ENCODE measurements at regions of chr20 and their contacts with region 1.

Region 1: DNA sequence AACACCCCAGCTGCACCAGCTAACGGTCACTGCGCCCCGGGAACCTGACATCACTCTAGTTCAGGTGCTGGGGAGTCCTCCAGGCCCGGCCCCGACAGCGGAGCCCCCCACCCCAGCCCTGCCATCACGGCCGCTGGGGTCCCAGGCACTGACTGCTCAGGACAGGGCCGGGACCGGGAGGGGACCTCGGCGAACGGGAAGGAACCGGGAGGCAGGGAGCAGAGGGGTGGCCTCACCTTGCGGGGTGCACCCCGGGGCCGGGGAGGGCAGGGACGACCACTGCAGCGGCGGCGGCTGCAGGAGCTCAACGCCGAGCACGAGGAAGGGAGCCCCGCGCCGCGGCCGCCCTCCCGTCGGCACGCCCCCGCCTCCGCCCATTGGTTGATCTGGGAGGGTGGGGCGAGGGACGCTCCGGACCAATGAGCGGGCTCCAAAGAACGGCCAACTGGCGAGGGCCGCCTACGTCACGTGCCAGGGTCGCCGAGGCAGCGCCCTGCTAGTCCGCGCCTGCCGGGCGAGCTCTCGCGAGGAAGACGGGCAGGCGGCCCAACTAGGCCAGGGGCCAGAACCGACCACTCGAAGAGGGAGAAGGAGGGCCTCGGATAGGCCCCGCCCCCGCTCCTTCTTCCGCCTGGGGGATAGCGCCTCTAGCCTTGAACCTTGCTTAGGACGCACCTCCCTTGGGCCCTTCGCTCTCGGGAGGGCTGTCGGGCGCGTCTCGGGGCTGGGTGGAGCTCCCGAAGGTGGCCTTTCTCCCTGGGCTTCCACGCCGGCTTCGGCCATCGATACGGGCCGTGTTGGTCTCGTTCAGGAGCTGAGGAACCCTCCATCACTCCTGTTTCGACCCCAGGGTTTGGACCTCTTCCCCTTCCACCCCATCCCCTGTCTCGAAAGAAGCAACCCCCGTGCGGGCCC is at the start of gene ADISSP:
- DNase-seq: peak; percentile 99
- ATAC-seq: peak; percentile 95 to 98 (median 96)
- H3K4me3 ChIP-seq: peak within 1 kb of the TSS; percentile 53 to 83 (median 65)
- H3K27ac ChIP-seq: peak within 1 kb of the TSS; percentile 48 to 95 (median 85)
- H3K4me1 ChIP-seq: peaks cover 7 to 61% (median 38%) of the 10 kb centered on the region in 9 donors
- H3K27me3 ChIP-seq: no peaks in the 10 kb centered on the region
- CTCF ChIP-seq: peak in 6 of 9 donors; percentile 7 to 40 (median 19)
- total RNA-seq, gene ADISSP: 7.7 to 15.7 (median 9.7) TPM

Region 2: DNA sequence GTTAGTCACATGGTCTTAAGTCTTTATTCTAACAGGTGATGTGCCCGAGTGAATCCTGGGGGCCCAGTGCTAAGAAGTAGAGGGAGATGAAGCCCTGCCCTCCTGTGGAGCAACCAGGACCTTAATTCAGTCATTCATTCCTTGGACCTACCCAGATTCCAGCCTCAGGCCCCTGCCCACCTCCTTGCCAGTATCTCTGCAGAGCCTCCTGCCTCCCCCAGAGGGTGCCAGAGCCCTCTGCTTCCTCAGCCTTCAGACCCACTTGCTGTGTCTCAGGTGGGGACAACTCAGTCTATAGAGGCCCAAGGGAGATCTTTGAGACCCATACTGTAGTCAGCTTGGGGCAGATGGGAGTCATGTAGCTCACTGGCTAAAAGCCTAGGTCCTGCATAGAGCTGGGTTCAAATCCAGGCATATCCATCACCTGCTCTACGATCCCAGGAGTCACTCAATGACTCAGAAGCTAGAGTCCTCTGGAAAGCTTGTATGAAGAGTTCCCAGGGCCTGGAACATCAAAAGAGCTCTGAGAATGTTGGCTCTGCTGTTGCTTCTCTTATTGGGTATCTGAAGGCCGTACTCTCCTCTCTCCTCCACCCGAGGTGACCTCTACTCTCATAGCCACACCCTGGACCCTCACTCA is 51.4 kb before region 1 on chr20:
- intact Hi-C with region 1: loop called in 5 of 10 experiments (anchors 5 kb)
- DNase-seq: peak; percentile 46 to 48
- ATAC-seq: peak in 7 of 8 donors; percentile 55 to 84 (median 73)
- H3K4me3 ChIP-seq: no peak overlapping the region
- H3K27ac ChIP-seq: no peak overlapping the region
- H3K4me1 ChIP-seq: peaks cover 0 to 27% (median under 1%) of the 10 kb centered on the region in 9 donors
- H3K27me3 ChIP-seq: peaks cover 0 to 4% (median 0%) of the 10 kb centered on the region in 7 donors
- CTCF ChIP-seq: peak; percentile 52 to 86 (median 78)

Region 3: DNA sequence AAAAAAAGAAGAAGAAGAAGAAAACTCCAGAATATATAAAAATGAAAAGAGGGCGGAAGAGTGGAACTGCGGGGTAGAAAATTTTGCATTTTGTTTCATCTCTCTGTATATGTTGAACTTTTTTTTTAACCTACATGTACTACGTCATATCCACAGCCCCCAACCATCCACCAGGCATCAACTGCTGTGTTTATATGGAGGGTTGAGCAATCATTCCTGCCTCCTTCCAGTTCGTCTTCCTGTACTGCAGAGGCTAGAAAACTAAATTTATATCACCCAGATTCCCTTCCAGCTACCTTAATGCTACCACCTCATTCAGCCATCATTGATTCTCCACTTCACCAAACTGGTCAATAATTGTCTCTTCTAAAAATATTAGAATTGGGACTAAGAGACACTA is 45.8 kb before region 1 on chr20:
- intact Hi-C with region 1: loop called in 5 of 10 experiments (anchors 5 kb)
- DNase-seq: no peak
- ATAC-seq: no peak
- H3K4me3 ChIP-seq: no peak overlapping the region
- H3K27ac ChIP-seq: no peak overlapping the region
- H3K4me1 ChIP-seq: peaks cover 0 to 6% (median under 1%) of the 10 kb centered on the region in 9 donors
- H3K27me3 ChIP-seq: peaks cover 0 to 22% (median 3%) of the 10 kb centered on the region in 7 donors
- CTCF ChIP-seq: no peak

Region 4: DNA sequence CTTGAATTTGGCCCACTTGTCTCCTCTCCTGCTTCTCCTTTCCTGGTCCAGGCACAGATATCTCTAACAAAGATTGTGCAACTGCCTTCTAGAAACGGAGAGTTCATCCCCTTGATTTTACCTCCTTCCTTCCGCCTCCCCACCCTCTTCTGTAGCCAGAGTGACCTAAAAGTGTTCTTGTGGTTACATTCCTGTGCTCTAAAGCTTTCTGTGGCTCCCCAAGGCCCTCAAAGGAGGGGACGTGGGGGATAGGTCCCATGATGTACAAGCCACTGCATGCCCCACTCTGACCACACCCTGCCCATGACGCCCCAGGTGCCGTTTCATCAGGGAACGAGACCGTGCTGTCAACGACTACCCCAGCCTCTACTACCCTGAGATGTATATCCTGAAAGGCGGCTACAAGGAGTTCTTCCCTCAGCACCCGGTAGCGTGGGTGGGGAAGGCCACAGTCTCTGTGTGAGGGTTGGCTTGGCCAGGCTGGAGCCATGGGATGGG is 36.6 kb after region 1 on chr20:
- intact Hi-C with region 1: no loop called
- DNase-seq: no peak
- ATAC-seq: no peak
- H3K4me3 ChIP-seq: no peak overlapping the region
- H3K27ac ChIP-seq: peak overlapping the region in 1 of 10 donors; percentile 93
- H3K4me1 ChIP-seq: peaks cover 7 to 56% (median 30%) of the 10 kb centered on the region in 9 donors
- H3K27me3 ChIP-seq: no peaks in the 10 kb centered on the region
- CTCF ChIP-seq: no peak

Region 5: DNA sequence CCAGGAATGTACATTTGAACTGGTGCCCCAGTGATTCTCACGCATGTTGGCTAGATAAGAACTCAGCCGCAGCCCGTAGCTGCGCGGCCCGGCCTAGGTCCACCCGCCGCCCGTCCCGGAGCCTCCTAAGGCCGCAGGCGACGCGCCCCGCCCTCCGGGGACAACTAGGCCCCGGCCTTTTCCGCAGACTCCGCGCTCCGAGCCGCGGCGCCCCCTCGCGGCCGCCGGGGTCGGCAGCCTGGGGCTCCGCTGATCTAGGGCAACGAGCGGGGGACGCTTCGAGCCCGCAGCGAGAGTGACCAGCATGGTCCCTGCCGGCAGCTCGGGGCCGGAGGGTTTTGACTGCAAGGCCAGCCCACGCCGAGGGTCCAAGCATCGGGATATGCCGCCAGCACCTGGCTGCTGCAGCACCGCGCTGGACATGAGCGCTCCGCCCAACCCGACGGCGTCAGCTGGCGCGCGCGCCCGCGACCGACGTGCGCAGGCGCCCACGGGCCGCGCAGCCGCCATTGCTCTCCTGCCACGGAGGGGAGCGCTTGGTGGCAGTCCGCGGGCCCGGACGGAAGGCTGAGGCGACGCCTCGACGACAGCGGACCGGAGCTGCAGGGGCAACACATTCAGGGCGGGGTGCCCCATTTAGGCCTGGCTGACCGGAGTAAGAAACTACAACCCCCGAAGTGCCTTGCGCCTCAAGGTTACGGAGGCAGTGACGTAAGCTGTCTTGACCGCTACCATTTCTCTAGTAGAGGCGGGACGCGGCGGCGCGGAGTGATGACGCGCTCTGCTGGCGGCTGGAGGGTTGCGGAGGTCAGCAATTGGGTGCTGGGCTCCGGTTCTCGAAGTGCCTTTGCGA is 52.6 kb after region 1 on chr20 and contains the start of gene AP5S1:
- intact Hi-C with region 1: no loop called
- DNase-seq: peak; percentile 97 to 98
- ATAC-seq: peak; percentile 90 to 95 (median 92)
- H3K4me3 ChIP-seq: peak within 1 kb of the TSS; percentile 65 to 81 (median 78)
- H3K27ac ChIP-seq: peak within 1 kb of the TSS; percentile 94 to 100 (median 98)
- H3K4me1 ChIP-seq: peaks cover 3 to 38% (median 34%) of the 10 kb centered on the region in 9 donors
- H3K27me3 ChIP-seq: no peaks in the 10 kb centered on the region
- CTCF ChIP-seq: peak; percentile 92 to 100 (median 99)
- total RNA-seq, gene AP5S1: 12.0 to 17.5 (median 14.7) TPM

Measured in heart right ventricle (tissue), 16 donors.